ENCODE measurements at regions of chr11 and their contacts with region 1.

Region 1: GRCh38 chr11:69925366-69926196 is 106.4 kb upstream of the FGF3 start:
- DNase-seq: peak in 1 of 6 donors; percentile 38
- ATAC-seq: peak in 1 of 4 donors; percentile 42
- H3K4me3 ChIP-seq: no peak overlapping the region
- H3K27ac ChIP-seq: no peak overlapping the region
- H3K4me1 ChIP-seq: no peaks in the 10 kb centered on the region
- H3K27me3 ChIP-seq: no peaks in the 10 kb centered on the region
- CTCF ChIP-seq: no peak

Region 2: GRCh38 chr11:69721745-69722144 is 203.8 kb before region 1 on chr11:
- intact Hi-C with region 1: no loop called
- DNase-seq: peak in 2 of 6 donors; percentile 19 to 34
- ATAC-seq: peak; percentile 53 to 97 (median 75)
- H3K4me3 ChIP-seq: peak overlapping the region in 1 of 4 donors; percentile 1
- H3K27ac ChIP-seq: no peak overlapping the region
- H3K4me1 ChIP-seq: no peaks in the 10 kb centered on the region
- H3K27me3 ChIP-seq: no peaks in the 10 kb centered on the region
- CTCF ChIP-seq: peak in 1 of 4 donors; percentile 14

Region 3: DNA sequence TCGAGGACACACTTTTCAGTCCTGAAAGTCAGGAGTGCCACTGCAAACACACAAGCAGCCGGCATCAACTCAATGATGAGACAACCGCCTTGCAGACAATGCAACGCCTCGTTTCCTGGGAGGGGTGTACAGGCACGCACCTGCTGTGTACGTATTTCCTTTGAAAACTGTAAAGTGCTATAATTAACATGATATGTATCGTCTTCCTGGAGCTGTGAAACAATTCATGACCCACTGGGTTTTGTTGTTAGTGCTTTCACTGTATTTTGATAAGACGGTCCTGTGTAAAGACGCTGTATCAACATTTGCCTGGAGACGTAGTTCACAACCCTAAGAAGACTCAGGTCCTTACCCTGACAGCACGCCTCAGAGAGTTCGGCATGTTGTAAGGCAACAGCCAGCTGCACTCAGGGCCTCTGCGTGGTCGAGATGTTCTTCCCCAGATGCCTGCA is 46.8 kb after region 1 on chr11:
- intact Hi-C with region 1: no loop called
- DNase-seq: peak in 1 of 6 donors; percentile 15
- ATAC-seq: no peak
- H3K4me3 ChIP-seq: no peak overlapping the region
- H3K27ac ChIP-seq: no peak overlapping the region
- H3K4me1 ChIP-seq: no peaks in the 10 kb centered on the region
- H3K27me3 ChIP-seq: no peaks in the 10 kb centered on the region
- CTCF ChIP-seq: no peak

Region 4: GRCh38 chr11:70176940-70177689 is 251.5 kb after region 1 on chr11:
- intact Hi-C with region 1: loop called in 1 of 3 experiments (anchors 10 kb)
- DNase-seq: peak in 1 of 6 donors; percentile 19
- ATAC-seq: peak in 3 of 4 donors; percentile 48 to 56 (median 54)
- H3K4me3 ChIP-seq: no peak overlapping the region
- H3K27ac ChIP-seq: no peak overlapping the region
- H3K4me1 ChIP-seq: no peaks in the 10 kb centered on the region
- H3K27me3 ChIP-seq: no peaks in the 10 kb centered on the region
- CTCF ChIP-seq: peak in 3 of 4 donors; percentile 7 to 29 (median 8)